ENCODE measurements at regions of chr2 and their contacts with region 1.

Region 1: DNA sequence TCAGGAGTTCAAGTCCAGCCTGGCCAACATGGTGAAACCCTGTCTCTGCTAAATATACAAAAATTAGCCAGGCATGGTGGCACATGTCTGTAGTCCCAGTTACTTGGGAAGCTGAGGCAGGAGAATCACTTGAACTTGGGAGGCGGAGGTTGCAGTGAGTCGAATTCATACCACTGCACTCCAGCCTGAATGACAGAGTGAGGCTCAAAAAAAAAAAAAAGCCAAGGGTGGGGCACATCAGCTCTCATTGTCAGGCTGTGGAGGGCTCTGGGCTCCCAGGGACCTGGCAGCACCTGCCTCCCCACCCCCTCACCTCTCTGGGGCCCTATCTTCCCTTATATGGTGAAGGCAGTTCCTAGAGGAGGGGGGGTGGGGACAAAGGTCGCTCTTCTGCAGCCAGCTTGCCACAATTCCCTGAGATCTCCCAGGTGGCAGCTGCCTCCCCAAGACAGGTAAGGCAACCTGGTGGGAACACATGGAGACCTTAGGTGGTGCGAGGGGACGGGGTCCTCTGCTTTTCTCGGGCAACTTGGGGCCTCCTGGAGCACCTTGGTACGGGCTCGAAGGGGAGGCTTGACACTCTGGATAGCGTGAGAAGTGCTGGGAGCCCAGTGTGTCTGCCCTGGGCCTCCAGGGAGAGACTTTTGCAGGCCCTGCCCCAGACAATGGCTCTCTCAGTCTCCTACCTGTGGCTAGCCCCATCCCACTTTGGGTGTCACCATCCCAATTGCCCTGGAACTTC is at the start of gene VIL1:
- DNase-seq: no peak
- H3K4me3 ChIP-seq: no peak within 1 kb of the TSS
- H3K4me3 Mint-ChIP-seq: no peak within 1 kb of the TSS
- H3K27ac ChIP-seq: no peak within 1 kb of the TSS
- H3K27ac Mint-ChIP-seq: no peak within 1 kb of the TSS
- H3K4me1 ChIP-seq: no peaks in the 10 kb centered on the region
- H3K4me1 Mint-ChIP-seq: peaks cover 6% of the 10 kb centered on the region
- H3K27me3 ChIP-seq: no peaks in the 10 kb centered on the region
- H3K27me3 Mint-ChIP-seq: peaks cover 2 to 9% (median 4%) of the 10 kb centered on the region in 3 donors
- CTCF ChIP-seq: no peak
- polyA plus RNA-seq, gene VIL1: not detected

Region 2: GRCh38 chr2:218286570-218287459 is 132.1 kb before region 1 on chr2:
- intact Hi-C with region 1: no loop called
- DNase-seq: peak; percentile 90 to 98 (median 94)
- H3K4me3 ChIP-seq: peak overlapping the region; percentile 25 to 67 (median 28)
- H3K4me3 Mint-ChIP-seq: peak overlapping the region; percentile 78 to 88
- H3K27ac ChIP-seq: peak overlapping the region; percentile 98
- H3K27ac Mint-ChIP-seq: peak overlapping the region; percentile 99 to 100 (median 100)
- H3K4me1 ChIP-seq: peaks cover 67 to 76% of the 10 kb centered on the region in 2 donors
- H3K4me1 Mint-ChIP-seq: peaks cover 73% of the 10 kb centered on the region
- H3K27me3 ChIP-seq: no peaks in the 10 kb centered on the region
- H3K27me3 Mint-ChIP-seq: peaks cover 0 to 2% (median 1%) of the 10 kb centered on the region in 3 donors
- CTCF ChIP-seq: no peak

Region 3: GRCh38 chr2:218466016-218466521 is 47.2 kb after region 1 on chr2:
- intact Hi-C with region 1: loop called in 1 of 2 experiments (anchors 10 kb)
- DNase-seq: peak in 2 of 3 donors; percentile 18 to 30
- H3K4me3 ChIP-seq: no peak overlapping the region
- H3K4me3 Mint-ChIP-seq: no peak overlapping the region
- H3K27ac ChIP-seq: peak overlapping the region in 1 of 2 donors; percentile 11
- H3K27ac Mint-ChIP-seq: peak overlapping the region in 1 of 7 donors; percentile 8
- H3K4me1 ChIP-seq: peaks cover 6 to 10% of the 10 kb centered on the region in 2 donors
- H3K4me1 Mint-ChIP-seq: peaks cover 13% of the 10 kb centered on the region
- H3K27me3 ChIP-seq: no peaks in the 10 kb centered on the region
- H3K27me3 Mint-ChIP-seq: no peaks in the 10 kb centered on the region
- CTCF ChIP-seq: peak; percentile 79